Naive thymus-derived CD4-positive, alpha-beta T cell (primary cell): ENCODE measurements at regions of chr2 and their contacts with region 1.

Region 1: GRCh38 chr2:201118121-201118960 is 2.4 kb downstream of the CFLAR start:
- DNase-seq: peak; percentile 66 to 85 (median 79)
- ATAC-seq: peak; percentile 65
- H3K4me3 ChIP-seq: peak overlapping the region; percentile 87
- H3K4me3 Mint-ChIP-seq: peak overlapping the region; percentile 90 to 100 (median 97)
- H3K27ac ChIP-seq: peak overlapping the region; percentile 93
- H3K27ac Mint-ChIP-seq: peak overlapping the region; percentile 90 to 100 (median 98)
- H3K4me1 ChIP-seq: peaks cover 23 to 36% of the 10 kb centered on the region in 2 donors
- H3K4me1 Mint-ChIP-seq: peaks cover 31 to 64% (median 50%) of the 10 kb centered on the region in 7 donors
- H3K27me3 ChIP-seq: no peaks in the 10 kb centered on the region
- H3K27me3 Mint-ChIP-seq: peaks cover 0 to 2% (median 0%) of the 10 kb centered on the region in 5 donors

Region 2: GRCh38 chr2:200811336-200812121 is 306.8 kb before region 1 on chr2 and contains the start of gene BZW1:
- CTCF ChIA-PET with region 1: no interaction called
- POLR2A ChIA-PET with region 1: interaction called, 5 read pairs
- intact Hi-C with region 1: loop called (anchors 1 kb)
- DNase-seq: peak; percentile 92 to 99 (median 98)
- ATAC-seq: peak; percentile 91
- H3K4me3 ChIP-seq: peak within 1 kb of the TSS; percentile 89
- H3K4me3 Mint-ChIP-seq: peak within 1 kb of the TSS; percentile 89 to 99 (median 98)
- H3K27ac ChIP-seq: peak within 1 kb of the TSS; percentile 99
- H3K27ac Mint-ChIP-seq: peak within 1 kb of the TSS; percentile 91 to 99 (median 98)
- H3K4me1 ChIP-seq: peaks cover 19 to 24% of the 10 kb centered on the region in 2 donors
- H3K4me1 Mint-ChIP-seq: peaks cover 30 to 56% (median 48%) of the 10 kb centered on the region in 7 donors
- H3K27me3 ChIP-seq: no peaks in the 10 kb centered on the region
- H3K27me3 Mint-ChIP-seq: peaks cover 0 to 2% (median 0%) of the 10 kb centered on the region in 5 donors
- total RNA-seq, gene BZW1: 127 to 246 (median 207) TPM

Region 3: DNA sequence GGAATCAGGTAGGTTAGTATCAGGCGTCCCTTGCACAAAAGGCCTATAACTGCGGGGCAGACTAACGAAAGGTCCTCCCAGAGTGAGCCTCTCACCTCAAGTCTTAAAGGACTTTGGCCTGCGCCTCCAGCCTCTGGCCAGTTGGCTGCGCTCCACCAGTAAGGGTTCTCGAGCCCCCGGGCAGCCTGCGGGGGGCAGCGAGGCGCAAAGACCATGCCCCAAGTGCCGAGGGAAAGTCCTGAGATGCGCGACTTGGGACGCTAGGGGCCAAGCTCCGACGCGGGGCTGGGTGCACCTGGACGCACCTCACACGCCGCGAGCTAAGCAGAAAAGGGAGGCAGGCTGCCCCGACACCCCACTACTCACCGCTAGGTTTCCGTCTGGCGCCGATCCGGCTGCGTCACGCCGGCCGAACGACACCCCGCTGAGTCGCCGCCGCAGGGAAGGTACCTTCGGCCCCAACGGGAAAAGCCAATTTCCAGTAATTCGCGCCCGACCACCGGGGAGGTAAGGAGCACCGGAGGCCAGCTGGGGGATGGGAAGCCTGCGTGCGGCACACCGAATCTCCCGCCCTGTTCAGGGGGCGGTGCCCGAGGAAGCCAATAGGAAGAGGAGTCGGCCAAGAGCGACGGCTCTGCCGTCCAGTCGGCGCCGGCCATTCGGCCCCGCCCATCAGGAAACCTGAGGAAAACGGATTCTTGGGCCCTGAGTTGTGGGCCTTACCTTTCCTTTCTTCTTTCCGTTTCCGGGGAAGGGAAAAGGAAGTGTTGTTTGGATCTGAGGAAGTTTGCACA is 155.0 kb before region 1 on chr2 and contains the start of gene ORC2:
- CTCF ChIA-PET with region 1: no interaction called
- POLR2A ChIA-PET with region 1: interaction called, 41 read pairs
- intact Hi-C with region 1: loop called (anchors 1 to 2 kb)
- DNase-seq: peak; percentile 92 to 97 (median 95)
- ATAC-seq: peak; percentile 98
- H3K4me3 ChIP-seq: peak within 1 kb of the TSS; percentile 89
- H3K4me3 Mint-ChIP-seq: peak within 1 kb of the TSS; percentile 89 to 100 (median 98)
- H3K27ac ChIP-seq: peak within 1 kb of the TSS; percentile 90
- H3K27ac Mint-ChIP-seq: peak within 1 kb of the TSS; percentile 96 to 100 (median 99)
- H3K4me1 ChIP-seq: peaks cover 21 to 32% of the 10 kb centered on the region in 2 donors
- H3K4me1 Mint-ChIP-seq: peaks cover 40 to 83% (median 70%) of the 10 kb centered on the region in 7 donors
- H3K27me3 ChIP-seq: no peaks in the 10 kb centered on the region
- H3K27me3 Mint-ChIP-seq: no peaks in the 10 kb centered on the region
- total RNA-seq, gene ORC2: 29.8 to 78.0 (median 56.2) TPM

Region 4: DNA sequence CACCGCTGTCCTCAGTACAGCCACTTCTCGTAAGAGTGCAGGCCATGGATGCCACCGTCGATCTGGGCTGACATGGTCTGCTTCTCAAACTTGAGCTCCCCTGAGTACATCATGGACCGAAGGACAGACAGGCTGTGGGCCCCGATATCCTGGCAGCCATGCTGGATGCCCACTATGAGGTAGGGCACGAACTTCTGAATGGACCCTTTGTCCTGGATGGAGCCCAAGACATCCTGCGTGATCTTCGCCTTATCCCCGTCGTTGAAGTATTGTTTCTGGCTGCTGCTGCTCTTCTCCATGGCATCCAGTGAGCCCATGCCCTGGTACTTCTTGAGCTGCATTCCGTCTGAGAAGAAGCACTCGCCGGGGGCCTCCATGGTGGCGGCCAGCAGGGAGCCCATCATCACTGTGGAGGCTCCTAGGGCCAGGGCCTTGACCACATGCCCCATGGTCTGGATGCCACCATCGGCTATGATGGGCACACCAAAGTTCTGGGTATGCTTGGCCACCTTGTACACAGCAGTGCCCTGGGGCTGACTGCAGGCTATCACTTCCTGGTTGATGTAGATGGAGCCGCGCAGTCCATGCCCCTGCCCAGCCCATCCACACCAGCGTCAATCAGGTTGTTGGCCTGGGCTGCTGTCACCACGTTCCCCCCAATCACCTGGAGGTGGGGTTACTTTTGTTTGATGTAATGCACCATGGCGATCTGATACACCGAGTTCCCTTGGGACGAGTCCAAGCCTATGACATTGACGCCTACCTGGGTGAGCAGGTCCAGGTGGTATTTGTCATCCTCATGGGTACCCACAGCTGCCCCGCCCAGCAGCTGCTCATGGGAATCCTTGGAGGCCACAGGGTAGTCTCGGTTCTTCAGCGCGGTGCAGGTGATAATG is 19.4 kb after region 1 on chr2:
- CTCF ChIA-PET with region 1: no interaction called
- POLR2A ChIA-PET with region 1: interaction called, 10 read pairs
- intact Hi-C with region 1: no loop called
- DNase-seq: no peak
- ATAC-seq: no peak
- H3K4me3 ChIP-seq: no peak overlapping the region
- H3K4me3 Mint-ChIP-seq: no peak overlapping the region
- H3K27ac ChIP-seq: no peak overlapping the region
- H3K27ac Mint-ChIP-seq: peak overlapping the region in 2 of 9 donors; percentile 13 to 46
- H3K4me1 ChIP-seq: peaks cover 7% of the 10 kb centered on the region in 2 donors
- H3K4me1 Mint-ChIP-seq: peaks cover 18 to 53% (median 21%) of the 10 kb centered on the region in 7 donors
- H3K27me3 ChIP-seq: no peaks in the 10 kb centered on the region
- H3K27me3 Mint-ChIP-seq: no peaks in the 10 kb centered on the region

Region 5: GRCh38 chr2:201182650-201183364 is 64.5 kb after region 1 on chr2 and contains the start of gene CASP10:
- CTCF ChIA-PET with region 1: interaction called, 3 read pairs
- POLR2A ChIA-PET with region 1: interaction called, 21 read pairs
- intact Hi-C with region 1: loop called in 1 of 2 experiments (anchors 1 kb)
- DNase-seq: peak in 7 of 9 donors; percentile 67 to 83 (median 77)
- ATAC-seq: peak; percentile 90
- H3K4me3 ChIP-seq: peak within 1 kb of the TSS; percentile 68
- H3K4me3 Mint-ChIP-seq: peak within 1 kb of the TSS; percentile 87 to 99 (median 95)
- H3K27ac ChIP-seq: peak within 1 kb of the TSS; percentile 89
- H3K27ac Mint-ChIP-seq: peak within 1 kb of the TSS; percentile 86 to 98 (median 95)
- H3K4me1 ChIP-seq: peaks cover 22 to 24% of the 10 kb centered on the region in 2 donors
- H3K4me1 Mint-ChIP-seq: peaks cover 26 to 46% (median 29%) of the 10 kb centered on the region in 7 donors
- H3K27me3 ChIP-seq: no peaks in the 10 kb centered on the region
- H3K27me3 Mint-ChIP-seq: no peaks in the 10 kb centered on the region
- total RNA-seq, gene CASP10: 29.0 to 49.8 (median 42.9) TPM

Region 6: DNA sequence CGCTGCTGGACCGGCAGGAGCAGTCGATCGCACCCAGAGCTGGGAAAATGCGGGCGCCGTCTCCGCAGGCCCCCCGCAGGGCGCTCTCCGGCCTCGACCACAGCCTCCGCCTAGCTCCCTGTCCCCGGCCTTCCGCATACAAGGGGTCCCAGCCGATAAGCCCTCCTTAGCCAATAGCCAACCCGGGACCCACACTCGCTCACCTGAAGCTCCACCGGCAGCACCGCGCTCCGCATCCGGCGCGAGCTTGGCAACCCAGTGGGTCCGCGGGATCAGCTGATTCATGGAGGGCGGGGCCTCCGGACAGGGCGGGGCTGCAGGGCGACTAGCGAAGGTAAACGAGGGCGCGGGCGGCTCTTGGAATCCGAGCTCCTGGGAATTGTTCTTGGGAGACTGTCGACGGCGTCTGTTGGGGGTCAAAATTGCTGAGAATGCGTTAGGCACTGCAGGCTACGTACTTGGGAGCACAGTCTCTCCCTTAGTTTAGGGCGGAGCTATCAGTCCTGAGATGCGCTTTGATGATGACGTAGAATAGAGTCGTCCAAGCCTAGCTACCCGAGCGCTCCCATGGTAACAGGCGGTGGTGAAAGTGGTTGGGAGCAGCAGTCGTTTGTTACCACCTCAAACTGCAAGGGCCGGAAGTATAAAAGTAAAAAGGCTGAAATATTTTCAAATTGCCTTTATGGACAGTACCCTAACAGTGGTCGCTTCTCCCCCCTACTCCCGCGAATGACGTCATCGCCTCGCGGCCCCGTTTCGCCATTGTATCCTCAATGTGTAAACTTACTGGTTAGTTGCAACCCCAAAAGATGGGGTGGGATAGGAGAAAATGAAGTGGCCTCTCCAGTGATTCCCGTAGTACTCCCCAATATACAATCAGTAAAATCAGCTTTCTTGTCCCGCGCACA is 662.6 kb after region 1 on chr2 and contains the start of gene ALS2:
- CTCF ChIA-PET with region 1: no interaction called
- POLR2A ChIA-PET with region 1: no interaction called
- intact Hi-C with region 1: loop called (anchors 2 to 5 kb)
- DNase-seq: peak; percentile 91 to 97 (median 95)
- ATAC-seq: peak; percentile 96
- H3K4me3 ChIP-seq: peak within 1 kb of the TSS; percentile 96
- H3K4me3 Mint-ChIP-seq: peak within 1 kb of the TSS; percentile 87 to 99 (median 98)
- H3K27ac ChIP-seq: peak within 1 kb of the TSS; percentile 84
- H3K27ac Mint-ChIP-seq: peak within 1 kb of the TSS; percentile 84 to 99 (median 97)
- H3K4me1 ChIP-seq: peaks cover 7 to 10% of the 10 kb centered on the region in 2 donors
- H3K4me1 Mint-ChIP-seq: peaks cover 5 to 36% (median 21%) of the 10 kb centered on the region in 7 donors
- H3K27me3 ChIP-seq: no peaks in the 10 kb centered on the region
- H3K27me3 Mint-ChIP-seq: peaks cover 0 to 22% (median 0%) of the 10 kb centered on the region in 5 donors
- total RNA-seq, gene ALS2: 8.9 to 13.5 (median 10.7) TPM

Region 7: GRCh38 chr2:201807452-201807999 is 689.2 kb after region 1 on chr2:
- CTCF ChIA-PET with region 1: no interaction called
- POLR2A ChIA-PET with region 1: no interaction called
- intact Hi-C with region 1: no loop called
- DNase-seq: no peak
- ATAC-seq: no peak
- H3K4me3 ChIP-seq: no peak overlapping the region
- H3K4me3 Mint-ChIP-seq: no peak overlapping the region
- H3K27ac ChIP-seq: no peak overlapping the region
- H3K27ac Mint-ChIP-seq: peak overlapping the region in 1 of 9 donors; percentile 49
- H3K4me1 ChIP-seq: no peaks in the 10 kb centered on the region
- H3K4me1 Mint-ChIP-seq: no peaks in the 10 kb centered on the region
- H3K27me3 ChIP-seq: no peaks in the 10 kb centered on the region
- H3K27me3 Mint-ChIP-seq: peaks cover 16 to 44% (median 17%) of the 10 kb centered on the region in 5 donors